ENCODE measurements at regions of chr12 and their contacts with region 1.

Region 1: GRCh38 chr12:65282840-65283239 is 4.4 kb downstream of the MSRB3 start:
- DNase-seq: no peak
- H3K4me3 ChIP-seq: no peak overlapping the region
- CTCF ChIP-seq: no peak

Region 2: GRCh38 chr12:65220761-65221160 is 62.1 kb before region 1 on chr12:
- CTCF ChIA-PET with region 1: no interaction called
- POLR2A ChIA-PET with region 1: no interaction called
- DNase-seq: no peak
- H3K4me3 ChIP-seq: no peak overlapping the region
- CTCF ChIP-seq: no peak

Region 3: GRCh38 chr12:65294641-65295262 is 11.9 kb after region 1 on chr12:
- CTCF ChIA-PET with region 1: interaction called, 34 read pairs
- POLR2A ChIA-PET with region 1: no interaction called
- DNase-seq: no peak
- H3K4me3 ChIP-seq: no peak overlapping the region
- CTCF ChIP-seq: no peak

Region 4: GRCh38 chr12:65300680-65301349 is 18.0 kb after region 1 on chr12:
- CTCF ChIA-PET with region 1: interaction called, 34 read pairs
- POLR2A ChIA-PET with region 1: no interaction called
- DNase-seq: no peak
- H3K4me3 ChIP-seq: no peak overlapping the region
- CTCF ChIP-seq: peak; percentile 39